ENCODE measurements at regions of chr2 and their contacts with region 1.

Region 1: DNA sequence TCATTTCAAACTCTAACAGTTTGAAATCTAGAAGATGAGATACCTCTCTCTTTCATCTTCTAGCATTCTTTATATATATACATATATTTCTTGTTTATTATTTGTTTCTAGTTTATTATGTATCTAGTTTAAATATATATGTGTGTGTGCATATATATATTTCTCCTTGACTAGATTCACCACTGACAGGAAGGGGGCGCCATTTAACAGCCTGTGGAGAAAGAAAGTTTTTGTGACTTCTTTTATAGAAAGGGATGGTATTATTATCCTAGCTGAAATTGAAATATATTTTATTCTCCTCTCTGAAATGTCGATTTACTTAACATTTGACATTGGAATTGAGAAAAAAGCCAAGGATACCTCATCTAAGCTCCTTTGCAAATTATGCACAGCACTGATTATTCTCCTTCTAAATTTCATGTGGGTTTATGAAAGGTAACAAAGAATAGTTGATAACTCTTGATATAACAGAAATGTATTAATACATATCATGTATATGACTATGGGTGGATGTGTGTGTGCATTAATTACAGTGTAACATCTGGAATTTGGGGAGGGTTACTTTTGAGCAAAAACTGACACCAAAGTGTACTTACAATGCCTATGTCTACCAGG is 160.7 kb upstream of the NT5C1B start:
- DNase-seq: peak; percentile 65
- H3K4me3 ChIP-seq: no peak overlapping the region
- H3K27ac ChIP-seq: no peak overlapping the region
- H3K4me1 ChIP-seq: no peaks in the 10 kb centered on the region
- H3K27me3 ChIP-seq: peaks cover 6% of the 10 kb centered on the region
- CTCF ChIP-seq: peak; percentile 88

Region 2: DNA sequence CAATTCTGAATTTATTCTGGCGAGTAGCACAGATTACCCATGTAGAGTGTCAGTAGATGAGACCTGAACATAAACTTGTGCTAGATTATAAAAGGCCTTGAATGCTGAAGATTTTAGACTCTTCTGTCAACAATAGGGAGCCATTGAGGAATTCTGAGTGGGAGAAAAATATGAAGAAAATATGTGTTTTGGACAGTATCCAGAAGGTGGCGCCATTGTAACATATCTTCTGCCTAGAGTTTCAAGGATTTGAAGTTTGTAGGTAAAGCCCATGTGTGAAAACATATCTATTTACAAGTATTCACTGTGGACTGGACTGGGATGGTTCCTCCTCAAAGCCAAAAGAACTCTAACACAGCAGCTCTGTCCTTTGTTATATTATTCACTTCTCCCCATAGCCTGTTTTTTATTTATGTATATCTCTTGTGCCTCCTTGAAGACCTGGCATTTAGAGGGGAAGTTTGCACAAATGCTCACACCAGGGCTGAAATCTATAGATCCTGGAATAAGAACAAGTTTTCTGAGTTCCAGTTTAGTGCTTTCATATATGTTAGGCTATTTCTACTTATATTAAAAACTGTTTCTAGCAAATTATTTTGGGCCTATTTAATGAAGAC is 314.5 kb before region 1 on chr2:
- CTCF ChIA-PET with region 1: no interaction called
- POLR2A ChIA-PET with region 1: no interaction called
- intact Hi-C with region 1: loop called (anchors 5 kb)
- DNase-seq: peak; percentile 74
- H3K4me3 ChIP-seq: no peak overlapping the region
- H3K27ac ChIP-seq: no peak overlapping the region
- H3K4me1 ChIP-seq: peaks cover 5% of the 10 kb centered on the region
- H3K27me3 ChIP-seq: no peaks in the 10 kb centered on the region
- CTCF ChIP-seq: peak; percentile 76

Region 3: DNA sequence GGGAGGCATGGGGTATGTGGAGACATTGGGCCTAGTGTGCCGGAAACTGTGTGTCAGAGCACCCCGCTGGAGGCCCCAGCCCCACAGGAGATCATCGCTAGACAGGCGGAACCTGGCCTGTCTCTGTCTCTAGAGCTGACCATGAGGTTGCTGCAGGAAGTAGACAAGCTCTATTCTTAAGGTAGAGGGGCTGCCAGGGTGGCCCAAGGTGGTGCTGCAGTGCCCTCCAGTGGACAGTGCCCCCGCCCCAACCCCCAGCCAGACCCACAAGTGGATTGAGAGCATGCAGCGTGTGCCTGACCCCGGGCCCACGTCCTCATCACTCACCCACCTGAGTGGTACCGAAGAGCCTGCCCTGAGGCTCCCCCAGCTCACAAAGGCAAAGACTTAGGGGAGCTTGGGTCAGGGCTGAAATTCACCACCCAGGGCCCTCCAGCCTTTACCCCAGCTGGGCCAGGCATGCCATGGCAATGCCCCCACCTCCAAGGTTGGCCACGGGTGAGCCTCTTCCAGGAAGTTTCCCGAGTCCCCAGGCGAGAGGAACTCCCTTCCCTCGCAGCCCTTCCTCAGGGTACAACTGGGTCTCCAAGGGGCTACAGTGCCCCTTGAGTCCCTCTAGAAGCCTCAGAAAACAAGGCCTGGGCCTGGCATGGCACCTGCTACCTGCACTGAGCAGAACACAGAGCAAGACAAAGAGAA is 996.7 kb after region 1 on chr2:
- CTCF ChIA-PET with region 1: no interaction called
- POLR2A ChIA-PET with region 1: no interaction called
- intact Hi-C with region 1: loop called (anchors 5 kb)
- DNase-seq: peak; percentile 35
- H3K4me3 ChIP-seq: no peak overlapping the region
- H3K27ac ChIP-seq: no peak overlapping the region
- H3K4me1 ChIP-seq: no peaks in the 10 kb centered on the region
- H3K27me3 ChIP-seq: no peaks in the 10 kb centered on the region
- CTCF ChIP-seq: peak; percentile 54

Measured in A673 (cell line).